Ovary (tissue), 10 donors: ENCODE measurements at regions of chr2 and their contacts with region 1.

Region 1: GRCh38 chr2:73408198-73408597 is 22.6 kb downstream of the ALMS1 start:
- DNase-seq: no peak
- H3K4me3 ChIP-seq: no peak overlapping the region
- H3K27ac ChIP-seq: no peak overlapping the region
- H3K4me1 ChIP-seq: no peaks in the 10 kb centered on the region
- H3K27me3 ChIP-seq: no peaks in the 10 kb centered on the region
- CTCF ChIP-seq: no peak
- EP300 ChIP-seq: no peak
- POLR2A ChIP-seq: no peak

Region 2: DNA sequence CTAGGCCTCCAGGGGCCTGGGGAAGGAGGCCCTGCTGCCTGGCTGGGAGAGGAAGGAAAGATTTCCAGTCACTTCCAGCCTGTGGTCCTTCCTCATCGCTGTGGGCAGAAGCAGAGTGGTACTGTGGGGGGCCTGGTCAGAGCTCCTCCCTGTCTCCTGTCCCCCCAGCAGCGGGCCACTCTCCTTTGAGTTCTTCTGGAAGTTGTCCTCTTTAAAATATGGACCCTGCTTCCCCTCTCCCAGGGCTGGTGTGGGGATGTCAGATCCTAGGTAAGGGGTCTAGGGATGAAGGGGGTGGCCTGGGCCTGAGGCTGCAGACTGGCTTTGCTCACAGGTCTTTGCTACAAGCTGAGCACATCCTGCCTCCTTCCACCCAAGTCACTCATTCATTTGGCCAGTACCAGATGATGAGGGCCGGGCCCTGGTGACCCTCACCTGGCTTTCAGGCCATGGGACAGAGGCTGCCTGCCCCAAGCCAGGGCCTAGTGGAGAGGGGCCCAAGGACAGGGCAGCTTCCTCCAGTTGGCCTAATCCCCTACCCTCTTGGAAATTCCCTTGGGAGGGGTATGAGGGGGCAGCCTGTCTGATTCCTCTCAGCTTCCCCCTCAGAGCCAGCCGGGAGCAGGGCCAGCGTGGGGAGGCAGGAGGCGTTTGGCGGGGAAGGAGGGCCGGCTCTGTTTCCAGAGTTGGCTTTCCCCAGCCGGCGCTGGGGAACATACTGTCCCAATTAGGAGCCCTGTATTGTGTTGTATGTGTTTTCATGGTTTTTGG is 1722.9 kb before region 1 on chr2:
- intact Hi-C with region 1: loop called in 1 of 4 experiments (anchors 10 kb)
- DNase-seq: peak in 1 of 5 donors; percentile 23
- H3K4me3 ChIP-seq: no peak overlapping the region
- H3K27ac ChIP-seq: no peak overlapping the region
- H3K4me1 ChIP-seq: no peaks in the 10 kb centered on the region
- H3K27me3 ChIP-seq: no peaks in the 10 kb centered on the region
- CTCF ChIP-seq: no peak
- EP300 ChIP-seq: no peak
- POLR2A ChIP-seq: no peak

Region 3: DNA sequence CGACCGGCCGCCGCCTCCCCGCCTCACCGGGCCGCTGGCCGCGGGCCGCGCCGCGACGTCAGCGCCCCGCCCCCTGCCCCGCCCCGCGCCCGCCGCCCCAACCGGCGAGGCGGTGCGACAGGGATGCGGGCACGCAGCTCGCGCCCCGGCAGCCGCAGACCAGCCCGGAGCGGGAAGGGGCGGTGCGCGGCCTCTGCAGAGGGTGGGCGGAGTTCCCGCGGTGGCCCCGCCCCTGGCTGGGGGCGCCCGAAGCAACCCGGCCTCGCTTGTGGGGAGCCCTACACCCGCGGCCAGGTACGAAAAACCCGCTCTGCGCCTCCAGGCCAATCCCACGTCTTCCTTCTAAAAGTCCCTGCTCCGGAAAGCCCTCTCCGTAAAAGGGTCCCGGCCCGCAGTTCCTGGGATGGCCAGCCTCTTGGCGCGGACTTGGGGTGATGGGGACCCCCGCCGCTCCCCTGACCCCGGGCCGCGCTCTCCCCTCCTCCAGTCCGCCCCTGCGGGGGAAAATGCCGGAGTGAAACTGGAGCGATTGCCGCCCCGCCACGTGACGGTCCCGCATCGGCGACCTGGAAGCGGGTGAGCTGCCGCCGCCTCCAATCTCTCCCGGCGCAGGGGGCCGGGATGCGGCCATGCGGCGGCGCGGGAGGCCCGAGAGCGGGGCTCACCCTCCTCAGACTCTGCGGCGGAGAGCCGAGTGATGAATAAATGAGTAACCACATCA is 295.1 kb before region 1 on chr2 and contains the start of gene RAB11FIP5:
- intact Hi-C with region 1: no loop called
- DNase-seq: peak; percentile 79 to 88 (median 85)
- H3K4me3 ChIP-seq: peak within 1 kb of the TSS; percentile 71
- H3K27ac ChIP-seq: peak within 1 kb of the TSS; percentile 82 to 85
- H3K4me1 ChIP-seq: peaks cover 7% of the 10 kb centered on the region
- H3K27me3 ChIP-seq: no peaks in the 10 kb centered on the region
- CTCF ChIP-seq: peak in 2 of 3 donors; percentile 13 to 28
- EP300 ChIP-seq: no peak
- POLR2A ChIP-seq: peak; percentile 26
- total RNA-seq, gene RAB11FIP5: 16.1 to 33.2 (median 25.0) TPM